ENCODE measurements at regions of chr11 and their contacts with region 1.

Region 1: DNA sequence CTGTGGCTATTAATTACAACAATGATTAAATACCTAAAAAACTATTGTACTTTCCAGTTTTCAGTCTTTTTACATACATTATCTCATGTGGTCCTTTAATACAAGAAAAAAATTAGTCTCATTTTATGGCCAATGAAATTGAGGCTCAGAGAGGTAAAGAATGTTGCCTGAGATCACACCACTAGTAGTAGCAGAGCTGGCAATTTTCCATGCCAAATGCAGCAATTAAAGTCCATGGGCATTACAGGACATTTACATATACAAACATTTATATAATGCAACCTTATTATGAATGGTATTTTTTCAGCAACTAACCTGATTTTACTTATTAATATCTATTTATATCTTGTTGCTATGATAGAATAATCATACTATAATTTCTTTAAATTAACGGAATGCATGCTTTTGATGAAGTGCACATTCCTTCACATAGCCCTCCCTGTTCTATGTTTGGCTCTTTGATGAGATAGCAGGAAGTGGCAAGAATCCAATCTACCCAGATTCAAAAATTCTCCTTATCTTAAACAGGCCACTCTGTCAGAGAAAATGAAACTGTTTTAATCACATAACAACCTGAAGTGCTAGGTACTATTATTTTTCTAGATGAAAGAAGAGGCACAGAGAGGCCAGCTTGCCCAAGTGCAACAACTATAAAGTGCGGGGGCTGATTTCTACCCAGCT is 120.9 kb upstream of the LDLRAD3 start:
- DNase-seq: no peak
- H3K4me3 ChIP-seq: no peak overlapping the region
- H3K27ac ChIP-seq: no peak overlapping the region
- H3K4me1 ChIP-seq: peaks cover 12 to 15% (median 12%) of the 10 kb centered on the region in 4 donors
- H3K27me3 ChIP-seq: no peaks in the 10 kb centered on the region
- CTCF ChIP-seq: no peak
- EP300 ChIP-seq: no peak
- POLR2A ChIP-seq: no peak

Region 2: GRCh38 chr11:35765211-35765610 is 57.7 kb before region 1 on chr11:
- intact Hi-C with region 1: no loop called
- DNase-seq: no peak
- H3K4me3 ChIP-seq: no peak overlapping the region
- H3K27ac ChIP-seq: no peak overlapping the region
- H3K4me1 ChIP-seq: peaks cover 13 to 27% (median 21%) of the 10 kb centered on the region in 4 donors
- H3K27me3 ChIP-seq: no peaks in the 10 kb centered on the region
- CTCF ChIP-seq: no peak
- EP300 ChIP-seq: no peak
- POLR2A ChIP-seq: no peak

Region 3: GRCh38 chr11:35873721-35874120 is 50.8 kb after region 1 on chr11:
- intact Hi-C with region 1: no loop called
- DNase-seq: peak; percentile 68
- H3K4me3 ChIP-seq: no peak overlapping the region
- H3K27ac ChIP-seq: no peak overlapping the region
- H3K4me1 ChIP-seq: no peaks in the 10 kb centered on the region
- H3K27me3 ChIP-seq: no peaks in the 10 kb centered on the region
- CTCF ChIP-seq: no peak
- EP300 ChIP-seq: no peak
- POLR2A ChIP-seq: no peak

Region 4: DNA sequence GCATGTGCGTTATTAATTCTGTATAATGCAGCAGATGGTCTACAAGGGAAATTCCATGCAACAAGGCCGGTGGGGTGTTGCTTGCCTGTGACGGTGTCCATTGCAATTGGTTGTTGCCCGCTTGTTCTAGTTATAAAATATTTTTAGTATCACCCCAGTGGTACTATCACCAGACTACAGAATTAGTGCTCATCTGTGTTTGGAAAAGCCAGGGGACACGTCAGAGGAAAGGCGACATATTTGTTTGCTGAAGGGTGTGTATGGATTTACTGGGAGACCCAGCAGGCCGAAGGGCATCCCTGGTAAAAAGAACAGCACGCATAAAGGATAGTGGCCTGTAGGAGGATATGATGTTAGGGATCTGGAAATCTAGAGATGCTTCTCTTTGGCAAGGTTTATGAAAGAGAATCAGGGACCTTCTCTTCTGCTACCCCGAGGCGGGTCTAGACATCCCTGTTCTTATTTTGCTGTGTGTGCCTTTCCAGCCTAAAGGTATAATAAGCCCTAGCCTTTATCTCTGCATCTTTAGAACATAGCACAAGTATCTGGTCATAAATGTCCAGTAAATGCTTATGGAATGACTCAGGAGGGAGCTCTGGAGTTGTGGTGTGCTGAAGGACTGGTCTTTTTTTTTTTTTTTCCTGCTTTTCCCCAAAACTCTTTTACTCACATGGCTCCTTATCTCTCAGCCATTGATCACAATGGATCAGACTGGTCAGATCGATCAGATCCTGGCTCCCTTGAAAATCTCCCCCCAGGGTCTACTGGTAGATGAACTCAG is 211.8 kb after region 1 on chr11:
- intact Hi-C with region 1: loop called (anchors 10 kb)
- DNase-seq: no peak
- H3K4me3 ChIP-seq: no peak overlapping the region
- H3K27ac ChIP-seq: no peak overlapping the region
- H3K4me1 ChIP-seq: peaks cover 4 to 26% (median 20%) of the 10 kb centered on the region in 4 donors
- H3K27me3 ChIP-seq: no peaks in the 10 kb centered on the region
- CTCF ChIP-seq: no peak
- EP300 ChIP-seq: no peak
- POLR2A ChIP-seq: no peak

Region 5: GRCh38 chr11:36131721-36132397 is 308.9 kb after region 1 on chr11:
- intact Hi-C with region 1: loop called (anchors 2 kb)
- DNase-seq: no peak
- H3K4me3 ChIP-seq: no peak overlapping the region
- H3K27ac ChIP-seq: no peak overlapping the region
- H3K4me1 ChIP-seq: peaks cover 0 to 7% (median 3%) of the 10 kb centered on the region in 4 donors
- H3K27me3 ChIP-seq: no peaks in the 10 kb centered on the region
- CTCF ChIP-seq: peak; percentile 46 to 72 (median 58)
- EP300 ChIP-seq: no peak
- POLR2A ChIP-seq: no peak

Region 6: DNA sequence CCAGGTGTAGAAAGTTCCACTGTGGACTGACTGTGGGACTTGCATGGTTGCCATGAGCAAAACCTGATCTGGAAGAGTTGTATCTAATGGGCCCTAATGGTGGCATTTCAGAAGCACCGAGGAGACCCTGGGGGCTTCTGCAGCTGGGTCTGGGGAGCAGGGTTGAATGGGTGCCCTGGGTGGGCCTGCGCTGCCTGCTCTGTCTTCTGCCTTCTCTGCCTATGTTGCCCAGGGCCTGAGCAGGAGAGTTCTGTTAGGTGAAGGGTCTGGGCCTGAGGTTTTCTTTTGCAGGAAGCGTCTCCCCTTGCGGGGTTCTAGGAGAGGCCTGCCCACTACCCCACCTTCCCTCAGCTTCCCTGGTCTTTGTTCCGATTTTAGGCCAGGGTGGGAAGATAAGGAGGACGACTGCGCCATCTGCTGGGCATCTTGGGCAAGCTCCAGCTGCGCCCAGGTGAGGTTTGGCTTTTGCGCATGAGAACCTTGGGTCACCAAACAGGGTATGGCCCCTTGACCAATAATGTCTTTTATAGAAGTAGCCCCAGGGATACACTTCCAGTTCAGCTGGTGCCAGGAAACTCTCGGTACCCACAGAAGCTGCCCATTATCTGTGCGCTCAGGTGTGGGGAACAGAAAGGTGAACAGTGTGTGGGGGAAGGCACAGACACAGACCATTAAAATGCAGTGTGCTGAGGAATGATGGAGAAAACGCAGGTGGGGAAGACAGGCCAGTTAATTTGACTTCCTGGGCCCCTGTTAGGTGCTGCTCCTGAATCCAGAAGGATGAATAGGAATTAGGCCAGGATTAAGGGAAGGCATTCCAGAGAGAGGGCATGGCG is 443.1 kb after region 1 on chr11:
- intact Hi-C with region 1: loop called (anchors 5 kb)
- DNase-seq: no peak
- H3K4me3 ChIP-seq: no peak overlapping the region
- H3K27ac ChIP-seq: no peak overlapping the region
- H3K4me1 ChIP-seq: peaks cover 0 to 3% (median 0%) of the 10 kb centered on the region in 4 donors
- H3K27me3 ChIP-seq: peaks cover 0 to 7% (median 0%) of the 10 kb centered on the region in 4 donors
- CTCF ChIP-seq: peak; percentile 70 to 80 (median 75)
- EP300 ChIP-seq: no peak
- POLR2A ChIP-seq: no peak